ENCODE measurements at regions of chr2 and their contacts with region 1.

Region 1: DNA sequence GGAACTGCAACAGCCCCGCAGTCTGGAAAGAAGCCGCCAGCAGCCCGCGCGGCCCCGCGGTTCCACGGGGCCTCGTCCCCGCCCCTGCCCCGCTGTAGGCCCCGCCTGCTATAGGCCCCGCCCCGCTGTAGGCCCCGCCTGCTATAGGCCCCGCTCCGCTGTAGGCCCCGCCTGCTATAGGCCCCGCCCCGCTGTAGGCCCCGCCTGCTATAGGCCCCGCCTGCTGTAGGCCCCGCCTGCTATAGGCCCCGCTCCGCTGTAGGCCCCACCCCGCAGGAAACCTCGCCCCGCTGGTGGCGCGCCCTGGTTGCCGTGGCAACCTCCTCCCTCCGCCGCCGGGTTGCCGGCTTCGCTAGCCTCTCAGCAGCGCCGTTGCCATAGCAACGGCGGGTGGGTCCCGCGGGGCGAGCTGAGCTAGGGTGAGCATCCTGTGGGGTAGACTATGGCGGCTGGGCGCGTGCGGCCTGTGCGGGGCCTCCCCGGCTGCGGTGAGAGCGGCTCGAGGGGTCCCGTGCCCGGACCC is 12.2 kb upstream of the KIF1A start:
- DNase-seq: peak; percentile 93 to 100 (median 99)
- ATAC-seq: peak; percentile 96
- H3K4me3 ChIP-seq: peak overlapping the region; percentile 32
- H3K4me3 Mint-ChIP-seq: peak overlapping the region in 8 of 10 donors; percentile 56 to 78 (median 71)
- H3K27ac ChIP-seq: no peak overlapping the region
- H3K27ac Mint-ChIP-seq: peak overlapping the region in 4 of 9 donors; percentile 22 to 88 (median 74)
- H3K4me1 ChIP-seq: peaks cover 11 to 14% of the 10 kb centered on the region in 2 donors
- H3K4me1 Mint-ChIP-seq: peaks cover 0 to 7% (median 0%) of the 10 kb centered on the region in 7 donors
- H3K27me3 ChIP-seq: no peaks in the 10 kb centered on the region
- H3K27me3 Mint-ChIP-seq: peaks cover 4 to 30% (median 19%) of the 10 kb centered on the region in 5 donors

Region 2: DNA sequence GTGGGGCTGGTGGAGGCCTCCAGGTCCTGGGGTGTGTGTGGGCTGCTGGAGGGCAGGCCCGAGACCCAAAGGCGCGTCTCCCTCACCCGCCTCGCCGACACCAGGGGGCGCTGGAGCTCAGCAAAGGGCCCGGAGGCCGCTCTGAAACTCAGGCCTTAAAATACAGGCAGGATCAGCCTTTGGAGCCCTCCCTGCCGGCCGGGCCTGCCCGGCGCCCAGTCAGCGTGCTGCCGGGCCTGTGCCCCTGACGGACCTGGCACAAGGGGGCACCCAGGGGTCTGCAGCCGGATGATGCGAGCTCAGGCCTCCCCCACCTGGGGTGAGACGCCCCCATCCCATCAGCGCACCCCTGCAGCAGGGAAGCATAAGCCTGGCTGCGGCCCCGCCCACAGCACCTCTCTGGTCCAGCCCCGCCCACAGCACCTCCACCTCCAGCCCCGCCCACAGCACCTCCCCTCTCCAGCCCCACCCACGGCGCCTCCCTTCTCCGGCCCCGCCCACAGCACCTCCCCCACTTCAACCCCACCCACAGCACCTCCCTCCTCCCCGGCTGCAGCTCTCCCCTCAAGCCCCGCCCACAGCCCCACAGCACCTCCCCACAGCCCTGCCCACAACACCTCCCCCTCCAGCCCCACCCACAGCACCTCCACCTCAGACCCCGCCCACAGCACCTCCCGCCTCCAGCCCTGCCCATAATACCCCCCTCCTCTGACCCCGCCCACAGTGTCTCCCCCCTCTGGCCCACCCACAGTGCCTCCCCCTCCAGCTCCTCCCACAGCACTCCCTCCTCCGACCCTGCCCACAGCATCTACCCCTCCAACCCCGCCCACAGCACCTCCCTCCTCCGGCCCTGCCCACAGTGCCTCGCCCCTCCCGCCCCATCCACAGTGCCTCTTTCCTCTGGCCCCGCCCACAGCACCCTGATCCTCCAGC is 599.0 kb before region 1 on chr2:
- CTCF ChIA-PET with region 1: no interaction called
- POLR2A ChIA-PET with region 1: no interaction called
- intact Hi-C with region 1: loop called in 1 of 2 experiments (anchors 10 kb)
- DNase-seq: peak; percentile 48 to 75 (median 69)
- ATAC-seq: peak; percentile 84
- H3K4me3 ChIP-seq: no peak overlapping the region
- H3K4me3 Mint-ChIP-seq: peak overlapping the region in 6 of 10 donors; percentile 21 to 74 (median 56)
- H3K27ac ChIP-seq: peak overlapping the region; percentile 13
- H3K27ac Mint-ChIP-seq: no peak overlapping the region
- H3K4me1 ChIP-seq: no peaks in the 10 kb centered on the region
- H3K4me1 Mint-ChIP-seq: peaks cover 0 to 14% (median 0%) of the 10 kb centered on the region in 7 donors
- H3K27me3 ChIP-seq: no peaks in the 10 kb centered on the region
- H3K27me3 Mint-ChIP-seq: peaks cover 0 to 20% (median 11%) of the 10 kb centered on the region in 5 donors

Region 3: DNA sequence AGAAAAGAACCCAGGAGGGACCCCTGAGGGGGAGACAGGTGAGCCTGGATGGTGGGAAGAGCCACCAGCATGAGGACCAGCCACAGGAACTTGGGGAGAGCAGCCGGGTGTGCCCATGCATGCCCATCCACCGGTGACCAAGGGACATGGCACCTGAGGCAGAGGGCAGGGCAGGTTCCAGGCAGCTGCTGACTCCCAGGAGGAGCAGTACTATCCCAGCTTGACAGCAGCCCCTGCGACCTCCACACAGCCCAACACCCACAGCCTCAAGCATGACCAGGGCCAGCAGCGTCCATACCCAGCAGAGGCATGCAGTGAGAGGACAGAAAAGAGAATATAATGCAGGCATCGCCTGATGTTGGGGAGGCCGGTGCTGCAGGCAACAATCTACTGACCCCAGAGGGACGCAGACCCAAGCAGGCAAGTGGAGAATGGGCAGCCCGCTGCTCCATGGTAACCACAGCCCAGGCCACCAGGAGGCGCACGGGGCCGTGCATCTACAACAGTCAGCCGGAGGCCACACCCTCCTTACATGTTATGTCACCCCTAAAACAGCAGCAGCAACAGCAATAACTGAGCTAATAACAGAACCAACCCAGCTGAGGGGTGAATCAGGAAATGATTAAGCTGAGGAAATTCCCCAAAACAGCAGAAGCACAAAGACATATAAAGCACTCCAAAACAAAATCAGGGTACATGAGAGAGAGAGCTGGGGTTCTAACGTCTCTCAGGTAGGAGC is 318.5 kb before region 1 on chr2:
- CTCF ChIA-PET with region 1: interaction called, 4 read pairs
- POLR2A ChIA-PET with region 1: no interaction called
- intact Hi-C with region 1: loop called in 1 of 2 experiments (anchors 2 kb)
- DNase-seq: peak; percentile 57 to 82 (median 76)
- ATAC-seq: peak; percentile 99
- H3K4me3 ChIP-seq: no peak overlapping the region
- H3K4me3 Mint-ChIP-seq: peak overlapping the region in 3 of 10 donors; percentile 12 to 28 (median 13)
- H3K27ac ChIP-seq: no peak overlapping the region
- H3K27ac Mint-ChIP-seq: peak overlapping the region; percentile 9 to 76 (median 42)
- H3K4me1 ChIP-seq: peaks cover 6% of the 10 kb centered on the region in 2 donors
- H3K4me1 Mint-ChIP-seq: peaks cover 6 to 16% (median 12%) of the 10 kb centered on the region in 7 donors
- H3K27me3 ChIP-seq: no peaks in the 10 kb centered on the region
- H3K27me3 Mint-ChIP-seq: no peaks in the 10 kb centered on the region

Region 4: GRCh38 chr2:240586198-240586918 is 245.9 kb before region 1 on chr2 and contains the start of gene CAPN10:
- CTCF ChIA-PET with region 1: no interaction called
- POLR2A ChIA-PET with region 1: no interaction called
- intact Hi-C with region 1: loop called (anchors 1 kb)
- DNase-seq: peak; percentile 93 to 98 (median 97)
- ATAC-seq: peak; percentile 92
- H3K4me3 ChIP-seq: peak within 1 kb of the TSS; percentile 89
- H3K4me3 Mint-ChIP-seq: peak within 1 kb of the TSS; percentile 82 to 97 (median 94)
- H3K27ac ChIP-seq: peak within 1 kb of the TSS; percentile 94
- H3K27ac Mint-ChIP-seq: peak within 1 kb of the TSS; percentile 90 to 97 (median 92)
- H3K4me1 ChIP-seq: peaks cover 30 to 33% of the 10 kb centered on the region in 2 donors
- H3K4me1 Mint-ChIP-seq: peaks cover 31 to 69% (median 56%) of the 10 kb centered on the region in 7 donors
- H3K27me3 ChIP-seq: no peaks in the 10 kb centered on the region
- H3K27me3 Mint-ChIP-seq: no peaks in the 10 kb centered on the region
- total RNA-seq, gene CAPN10: 54.1 to 74.8 (median 64.5) TPM

Region 5: DNA sequence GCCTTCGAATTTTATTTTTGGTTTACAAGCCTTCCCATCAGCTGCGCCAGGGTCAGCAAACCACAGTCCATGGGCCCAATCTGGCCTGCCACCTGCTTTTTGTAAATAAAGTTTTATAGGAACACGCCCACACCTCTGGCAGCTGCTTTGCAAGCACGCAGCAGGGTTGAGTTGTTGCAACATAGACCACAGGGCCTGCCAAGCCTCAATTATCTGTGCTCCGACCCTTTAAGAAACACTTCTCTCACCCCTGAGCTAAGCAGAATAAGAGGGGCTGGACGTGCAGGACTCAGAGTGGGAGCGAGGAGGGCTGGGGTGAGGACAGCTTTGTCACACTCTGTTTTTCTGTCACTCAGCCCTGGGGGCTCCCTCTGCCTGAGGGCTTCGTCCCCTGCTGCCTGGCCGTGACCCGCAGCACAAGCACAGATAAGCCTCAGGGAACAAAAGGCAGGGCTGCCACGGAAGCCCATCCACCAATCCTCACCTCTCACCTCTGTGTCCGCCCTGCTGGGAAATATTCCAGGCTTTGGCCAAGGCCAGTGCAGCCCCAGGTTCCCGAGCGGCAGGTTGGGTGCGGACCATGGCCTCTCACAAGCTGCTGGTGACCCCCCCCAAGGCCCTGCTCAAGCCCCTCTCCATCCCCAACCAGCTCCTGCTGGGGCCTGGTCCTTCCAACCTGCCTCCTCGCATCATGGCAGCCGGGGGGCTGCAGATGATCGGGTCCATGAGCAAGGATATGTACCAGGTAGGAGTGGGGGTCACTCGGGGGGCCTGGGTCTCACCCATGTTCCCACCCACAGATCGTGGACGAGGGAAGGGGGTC is 36.2 kb after region 1 on chr2 and contains the start of gene AGXT:
- CTCF ChIA-PET with region 1: no interaction called
- POLR2A ChIA-PET with region 1: no interaction called
- intact Hi-C with region 1: no loop called
- DNase-seq: no peak
- ATAC-seq: no peak
- H3K4me3 ChIP-seq: no peak within 1 kb of the TSS
- H3K4me3 Mint-ChIP-seq: no peak within 1 kb of the TSS
- H3K27ac ChIP-seq: no peak within 1 kb of the TSS
- H3K27ac Mint-ChIP-seq: no peak within 1 kb of the TSS
- H3K4me1 ChIP-seq: no peaks in the 10 kb centered on the region
- H3K4me1 Mint-ChIP-seq: peaks cover 0 to 3% (median 0%) of the 10 kb centered on the region in 7 donors
- H3K27me3 ChIP-seq: no peaks in the 10 kb centered on the region
- H3K27me3 Mint-ChIP-seq: peaks cover 0 to 13% (median 5%) of the 10 kb centered on the region in 5 donors
- total RNA-seq, gene AGXT: not detected

Region 6: GRCh38 chr2:241355983-241356870 is 524.0 kb after region 1 on chr2 and contains the start of gene FARP2:
- CTCF ChIA-PET with region 1: no interaction called
- POLR2A ChIA-PET with region 1: no interaction called
- intact Hi-C with region 1: loop called (anchors 1 kb)
- DNase-seq: peak; percentile 91 to 99 (median 97)
- ATAC-seq: peak; percentile 93
- H3K4me3 ChIP-seq: peak within 1 kb of the TSS; percentile 54
- H3K4me3 Mint-ChIP-seq: peak within 1 kb of the TSS; percentile 75 to 92 (median 85)
- H3K27ac ChIP-seq: peak within 1 kb of the TSS; percentile 72
- H3K27ac Mint-ChIP-seq: peak within 1 kb of the TSS in 8 of 9 donors; percentile 80 to 95 (median 90)
- H3K4me1 ChIP-seq: peaks cover 6 to 7% of the 10 kb centered on the region in 2 donors
- H3K4me1 Mint-ChIP-seq: peaks cover 5 to 34% (median 19%) of the 10 kb centered on the region in 7 donors
- H3K27me3 ChIP-seq: no peaks in the 10 kb centered on the region
- H3K27me3 Mint-ChIP-seq: no peaks in the 10 kb centered on the region
- total RNA-seq, gene FARP2: 12.4 to 31.0 (median 22.1) TPM

Region 7: DNA sequence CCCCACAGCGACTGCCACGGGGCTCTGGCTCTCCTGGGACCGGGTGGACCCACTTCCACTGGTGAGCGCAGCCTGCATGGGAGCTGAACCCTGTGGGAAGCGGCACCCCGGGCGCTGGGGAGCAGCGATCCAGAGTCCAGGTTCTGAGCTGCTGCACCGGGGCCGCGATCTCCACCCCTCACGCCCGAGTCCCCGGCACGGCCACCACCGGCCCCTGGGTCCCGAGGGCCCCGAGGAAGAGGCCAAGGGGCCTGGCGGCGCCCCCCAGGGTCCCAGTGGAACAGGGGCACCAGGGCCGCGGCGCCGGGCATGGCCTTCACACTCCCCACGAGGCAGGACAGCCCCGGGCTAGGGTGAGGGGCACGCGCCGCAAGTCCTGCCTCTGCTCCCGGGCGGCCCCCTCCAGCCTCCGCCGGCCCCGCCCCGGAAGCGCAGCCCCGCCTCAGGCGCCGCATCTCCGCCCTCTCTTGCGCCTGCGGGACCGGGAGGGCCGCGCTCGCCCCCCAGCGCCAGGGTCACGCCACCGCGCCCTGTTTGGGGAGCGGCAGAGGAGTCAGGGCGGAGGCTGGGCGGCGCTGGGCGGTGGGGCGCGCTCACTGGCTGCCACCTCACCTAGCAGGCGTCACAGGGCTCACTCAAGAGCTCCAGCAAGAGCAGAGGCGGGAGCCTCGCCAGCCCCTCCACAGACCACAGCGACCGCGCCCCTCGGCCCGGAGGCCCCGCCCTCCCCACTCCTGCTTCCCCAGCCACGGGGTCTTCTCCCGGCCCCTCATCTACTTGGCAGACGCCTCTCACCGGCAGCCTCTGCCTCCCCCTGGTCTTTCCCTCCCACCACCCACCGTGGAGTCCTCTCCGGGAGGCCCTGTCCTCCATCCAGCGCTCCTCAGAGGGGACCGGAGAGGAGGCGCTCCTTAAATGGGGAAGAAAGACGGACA is 777.9 kb after region 1 on chr2:
- CTCF ChIA-PET with region 1: no interaction called
- POLR2A ChIA-PET with region 1: no interaction called
- intact Hi-C with region 1: loop called in 1 of 2 experiments (anchors 1 kb)
- DNase-seq: peak; percentile 87 to 92 (median 90)
- ATAC-seq: peak; percentile 99
- H3K4me3 ChIP-seq: peak overlapping the region; percentile 53
- H3K4me3 Mint-ChIP-seq: peak overlapping the region in 9 of 10 donors; percentile 61 to 79 (median 71)
- H3K27ac ChIP-seq: peak overlapping the region; percentile 61
- H3K27ac Mint-ChIP-seq: peak overlapping the region; percentile 9 to 95 (median 68)
- H3K4me1 ChIP-seq: peaks cover 14 to 17% of the 10 kb centered on the region in 2 donors
- H3K4me1 Mint-ChIP-seq: peaks cover 16 to 33% (median 24%) of the 10 kb centered on the region in 7 donors
- H3K27me3 ChIP-seq: no peaks in the 10 kb centered on the region
- H3K27me3 Mint-ChIP-seq: no peaks in the 10 kb centered on the region

Region 8: DNA sequence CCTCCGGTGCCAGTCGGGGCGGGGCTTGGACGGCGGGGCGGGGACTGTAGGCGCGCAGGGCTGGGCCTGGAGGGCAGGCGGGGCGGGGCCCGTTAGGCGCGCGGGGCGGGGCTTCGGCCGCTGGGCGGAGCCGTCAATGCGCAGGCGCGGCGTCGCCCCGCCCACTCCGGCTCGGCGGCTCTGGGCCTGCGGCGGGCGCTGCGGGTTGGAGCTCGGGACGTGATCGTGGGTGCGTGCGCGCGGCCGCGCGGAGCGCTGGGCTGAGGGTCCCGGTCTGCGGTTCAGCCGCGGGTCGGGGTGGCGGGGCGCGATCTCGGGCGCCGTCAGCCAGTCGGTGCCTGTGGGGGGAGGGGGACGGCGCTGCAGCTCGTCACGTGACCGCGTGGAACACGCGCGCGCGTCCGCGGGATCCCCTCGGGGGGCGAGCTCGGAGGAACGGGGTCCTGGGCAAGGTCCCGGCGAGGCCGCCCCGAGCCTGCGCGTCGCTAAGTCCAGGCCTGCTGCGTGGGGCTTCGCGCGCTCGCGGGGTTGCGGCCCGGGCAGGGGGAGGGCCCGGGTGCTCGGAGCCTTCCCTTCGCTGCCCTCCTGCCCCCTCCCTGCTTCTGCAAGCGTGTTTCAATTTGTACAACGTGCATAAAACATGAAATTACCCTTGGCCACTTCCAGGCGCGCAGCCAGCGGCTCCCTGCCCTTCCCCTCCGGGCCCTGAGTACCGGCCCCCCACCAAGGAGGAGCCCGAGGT is 902.4 kb after region 1 on chr2 and contains the start of gene D2HGDH:
- CTCF ChIA-PET with region 1: no interaction called
- POLR2A ChIA-PET with region 1: no interaction called
- intact Hi-C with region 1: loop called in 1 of 2 experiments (anchors 1 kb)
- DNase-seq: peak; percentile 85 to 99 (median 91)
- ATAC-seq: peak; percentile 98
- H3K4me3 ChIP-seq: peak within 1 kb of the TSS; percentile 88
- H3K4me3 Mint-ChIP-seq: peak within 1 kb of the TSS; percentile 79 to 89 (median 84)
- H3K27ac ChIP-seq: peak within 1 kb of the TSS; percentile 75
- H3K27ac Mint-ChIP-seq: peak within 1 kb of the TSS in 8 of 9 donors; percentile 40 to 79 (median 72)
- H3K4me1 ChIP-seq: peaks cover 9% of the 10 kb centered on the region in 2 donors
- H3K4me1 Mint-ChIP-seq: peaks cover 9 to 54% (median 43%) of the 10 kb centered on the region in 7 donors
- H3K27me3 ChIP-seq: no peaks in the 10 kb centered on the region
- H3K27me3 Mint-ChIP-seq: no peaks in the 10 kb centered on the region
- total RNA-seq, gene D2HGDH: 32.5 to 49.8 (median 41.1) TPM